ENCODE measurements at regions of chr10 and their contacts with region 1.

Region 1: DNA sequence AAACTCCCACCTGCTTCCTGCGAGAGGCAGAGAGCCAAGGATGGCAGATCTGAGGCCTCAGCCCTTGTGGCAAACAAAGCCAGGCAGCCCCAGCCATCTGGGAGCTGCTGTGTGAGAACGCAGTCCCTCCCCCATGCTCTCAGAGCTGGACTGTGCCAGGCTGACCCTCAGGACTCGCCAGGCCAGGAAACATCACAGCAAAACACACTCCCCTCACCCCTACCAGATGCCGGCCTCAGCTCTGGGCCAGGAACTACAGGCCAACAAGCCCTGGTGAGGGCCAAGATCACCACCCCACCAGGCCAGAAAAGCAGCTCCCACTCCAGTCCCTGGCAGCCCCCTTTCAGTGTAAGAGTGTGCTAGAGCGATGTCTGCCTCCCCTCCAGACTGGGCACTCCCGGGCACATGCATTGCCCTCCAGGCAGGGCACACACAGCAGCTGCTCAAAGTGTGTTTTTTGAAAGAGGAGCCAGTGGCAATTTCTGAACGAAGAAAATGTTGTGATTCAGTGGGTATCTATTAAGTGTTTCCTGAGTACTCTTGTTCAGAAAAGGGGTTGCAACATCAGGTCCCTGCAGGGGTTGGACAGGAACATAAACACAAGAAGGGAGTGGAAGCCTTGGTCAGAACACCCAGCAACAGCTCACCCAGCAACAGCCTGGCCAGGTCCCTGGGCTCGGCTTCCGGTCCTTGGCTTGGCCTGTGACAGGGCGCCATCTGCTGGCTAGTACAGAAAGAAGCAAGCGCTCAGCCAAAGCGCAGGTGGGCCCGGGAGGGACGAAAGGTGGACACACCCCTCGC is 18.3 kb downstream of the LRRC20 start:
- DNase-seq: peak; percentile 93
- ATAC-seq: peak; percentile 100
- H3K4me3 Mint-ChIP-seq: no peak overlapping the region
- H3K27ac Mint-ChIP-seq: no peak overlapping the region
- H3K4me1 Mint-ChIP-seq: peaks cover 6% of the 10 kb centered on the region
- H3K27me3 Mint-ChIP-seq: no peaks in the 10 kb centered on the region

Region 2: GRCh38 chr10:70115948-70116682 is 248.1 kb before region 1 on chr10:
- CTCF ChIA-PET with region 1: interaction called, 21 read pairs
- POLR2A ChIA-PET with region 1: no interaction called
- intact Hi-C with region 1: loop called in 1 of 2 experiments (anchors 1 kb)
- DNase-seq: peak; percentile 71
- ATAC-seq: peak; percentile 88
- H3K4me3 Mint-ChIP-seq: no peak overlapping the region
- H3K27ac Mint-ChIP-seq: no peak overlapping the region
- H3K4me1 Mint-ChIP-seq: peaks cover 4% of the 10 kb centered on the region
- H3K27me3 Mint-ChIP-seq: no peaks in the 10 kb centered on the region

Region 3: GRCh38 chr10:70227548-70228320 is 136.4 kb before region 1 on chr10:
- CTCF ChIA-PET with region 1: interaction called, 220 read pairs
- POLR2A ChIA-PET with region 1: interaction called, 3 read pairs
- intact Hi-C with region 1: no loop called
- DNase-seq: no peak
- ATAC-seq: no peak
- H3K4me3 Mint-ChIP-seq: no peak overlapping the region
- H3K27ac Mint-ChIP-seq: no peak overlapping the region
- H3K4me1 Mint-ChIP-seq: peaks cover 52% of the 10 kb centered on the region
- H3K27me3 Mint-ChIP-seq: no peaks in the 10 kb centered on the region

Region 4: GRCh38 chr10:70267161-70267933 is 96.8 kb before region 1 on chr10:
- CTCF ChIA-PET with region 1: interaction called, 15 read pairs
- POLR2A ChIA-PET with region 1: interaction called, 4 read pairs
- intact Hi-C with region 1: loop called in 1 of 2 experiments (anchors 1 kb)
- DNase-seq: peak; percentile 41
- ATAC-seq: peak; percentile 58
- H3K4me3 Mint-ChIP-seq: no peak overlapping the region
- H3K27ac Mint-ChIP-seq: peak overlapping the region; percentile 7
- H3K4me1 Mint-ChIP-seq: peaks cover 21% of the 10 kb centered on the region
- H3K27me3 Mint-ChIP-seq: no peaks in the 10 kb centered on the region

Region 5: GRCh38 chr10:70348228-70348850 is 15.8 kb before region 1 on chr10:
- CTCF ChIA-PET with region 1: interaction called, 20 read pairs
- POLR2A ChIA-PET with region 1: no interaction called
- intact Hi-C with region 1: no loop called
- DNase-seq: peak; percentile 57
- ATAC-seq: peak; percentile 61
- H3K4me3 Mint-ChIP-seq: no peak overlapping the region
- H3K27ac Mint-ChIP-seq: no peak overlapping the region
- H3K4me1 Mint-ChIP-seq: no peaks in the 10 kb centered on the region
- H3K27me3 Mint-ChIP-seq: no peaks in the 10 kb centered on the region

Region 6: GRCh38 chr10:70381471-70382421 is 17.6 kb after region 1 on chr10:
- CTCF ChIA-PET with region 1: interaction called, 26 read pairs
- POLR2A ChIA-PET with region 1: no interaction called
- intact Hi-C with region 1: no loop called
- DNase-seq: peak; percentile 61
- ATAC-seq: peak; percentile 47
- H3K4me3 Mint-ChIP-seq: peak overlapping the region; percentile 81
- H3K27ac Mint-ChIP-seq: peak overlapping the region; percentile 33
- H3K4me1 Mint-ChIP-seq: peaks cover 6% of the 10 kb centered on the region
- H3K27me3 Mint-ChIP-seq: peaks cover 3% of the 10 kb centered on the region

Measured in activated CD4-positive, alpha-beta T cell treated with anti-CD3 and anti-CD28 coated beads for 36 hours (primary cell).